PC-9 (cell line): ENCODE measurements at regions of chr12 and their contacts with region 1.

Region 1: GRCh38 chr12:57941165-57941894 is at the start of gene ATP23:
- DNase-seq: peak; percentile 86 to 96
- H3K4me3 ChIP-seq: peak within 1 kb of the TSS; percentile 68
- H3K27ac ChIP-seq: peak within 1 kb of the TSS; percentile 62
- H3K4me1 ChIP-seq: peaks cover 22% of the 10 kb centered on the region; the same call in 1 of the 2 replicates
- H3K27me3 ChIP-seq: no peaks in the 10 kb centered on the region
- CTCF ChIP-seq: no peak
- total RNA-seq, gene ATP23: 5.1 and 6.5 TPM in 2 replicates

Region 2: GRCh38 chr12:57929092-57929830 is 12.1 kb before region 1 on chr12:
- CTCF ChIA-PET with region 1: no interaction called
- POLR2A ChIA-PET with region 1: interaction called, 22 read pairs
- intact Hi-C with region 1: no loop called
- DNase-seq: no peak
- H3K4me3 ChIP-seq: no peak overlapping the region
- H3K27ac ChIP-seq: no peak overlapping the region
- H3K4me1 ChIP-seq: no peaks in the 10 kb centered on the region
- H3K27me3 ChIP-seq: no peaks in the 10 kb centered on the region
- CTCF ChIP-seq: no peak